ENCODE measurements at regions of chr11 and their contacts with region 1.

Region 1: GRCh38 chr11:67401495-67402191 is at the start of gene PPP1CA:
- DNase-seq: peak; percentile 91 to 96
- ATAC-seq: peak; percentile 89 to 92 (median 92)
- H3K4me3 ChIP-seq: peak within 1 kb of the TSS; percentile 99
- H3K27ac ChIP-seq: peak within 1 kb of the TSS; percentile 95
- H3K4me1 ChIP-seq: peaks cover 32% of the 10 kb centered on the region
- H3K27me3 ChIP-seq: no peaks in the 10 kb centered on the region
- CTCF ChIP-seq: peak; percentile 63
- total RNA-seq, gene PPP1CA: 72.6 to 113 (median 86.6) TPM

Region 2: GRCh38 chr11:67332081-67332691 is 69.5 kb before region 1 on chr11:
- intact Hi-C with region 1: no loop called
- DNase-seq: no peak
- ATAC-seq: no peak
- H3K4me3 ChIP-seq: no peak overlapping the region
- H3K27ac ChIP-seq: no peak overlapping the region
- H3K4me1 ChIP-seq: no peaks in the 10 kb centered on the region
- H3K27me3 ChIP-seq: no peaks in the 10 kb centered on the region
- CTCF ChIP-seq: no peak

Region 3: DNA sequence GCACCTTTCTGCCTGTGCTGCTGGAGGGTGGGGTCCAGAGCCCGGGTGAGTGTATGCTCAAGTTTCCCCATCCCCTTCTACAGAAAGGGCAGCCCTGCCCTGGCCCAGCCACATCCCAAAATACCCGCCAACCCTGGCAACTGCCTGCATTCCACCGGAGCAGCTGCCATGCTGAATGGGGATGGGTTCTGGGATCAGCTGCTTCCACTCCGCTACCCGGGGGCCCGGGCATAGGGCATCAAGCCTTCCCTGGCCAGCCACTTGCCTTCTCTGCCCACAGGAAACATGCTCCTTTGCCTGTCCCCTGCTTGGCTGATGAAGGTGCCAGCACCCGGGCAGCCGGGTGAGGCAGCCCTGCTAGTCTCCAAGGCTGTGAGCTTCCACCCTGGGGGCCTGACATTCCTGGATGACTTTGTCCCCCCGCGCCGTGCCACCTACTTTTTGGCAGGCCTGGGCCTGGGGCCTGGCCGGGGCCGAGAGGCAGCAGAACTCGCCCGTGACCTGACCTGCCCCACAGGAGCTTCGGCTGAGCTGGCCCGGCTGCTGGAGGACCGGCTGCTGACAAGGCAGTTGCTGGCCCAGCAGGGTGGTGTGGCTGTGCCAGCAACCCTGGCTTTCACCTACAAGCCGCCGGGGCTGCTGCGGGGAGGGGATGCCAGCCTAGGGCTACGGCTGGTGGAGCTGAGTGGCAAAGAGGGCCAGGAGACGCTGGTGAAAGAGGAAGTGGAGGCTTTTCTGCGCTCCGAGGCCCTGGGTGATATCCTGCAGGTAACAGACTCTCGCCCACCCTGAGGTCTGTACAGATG is 17.0 kb after region 1 on chr11:
- intact Hi-C with region 1: loop called in 1 of 2 experiments (anchors 2 kb)
- DNase-seq: peak; percentile 60 to 82
- ATAC-seq: peak; percentile 50 to 71 (median 70)
- H3K4me3 ChIP-seq: peak overlapping the region; percentile 68
- H3K27ac ChIP-seq: peak overlapping the region; percentile 95
- H3K4me1 ChIP-seq: peaks cover 47% of the 10 kb centered on the region
- H3K27me3 ChIP-seq: no peaks in the 10 kb centered on the region
- CTCF ChIP-seq: no peak